ENCODE measurements at regions of chr11 and their contacts with region 1.

Region 1: GRCh38 chr11:1832211-1832919 is 2.4 kb upstream of the SYT8 start:
- DNase-seq: no peak
- H3K4me3 ChIP-seq: peak overlapping the region in 3 of 4 donors; percentile 5 to 34 (median 30)
- H3K27ac ChIP-seq: no peak overlapping the region
- H3K4me1 ChIP-seq: peaks cover 8 to 21% (median 11%) of the 10 kb centered on the region in 4 donors
- H3K27me3 ChIP-seq: peaks cover 0 to 58% (median under 1%) of the 10 kb centered on the region in 4 donors
- CTCF ChIP-seq: peak; percentile 91 to 99 (median 99)
- EP300 ChIP-seq: no peak
- POLR2A ChIP-seq: no peak

Region 2: GRCh38 chr11:1298695-1299492 is 533.5 kb before region 1 on chr11:
- intact Hi-C with region 1: no loop called
- DNase-seq: peak; percentile 95
- H3K4me3 ChIP-seq: peak overlapping the region in 2 of 4 donors; percentile 7 to 20
- H3K27ac ChIP-seq: peak overlapping the region; percentile 74 to 95 (median 80)
- H3K4me1 ChIP-seq: peaks cover 47 to 76% (median 63%) of the 10 kb centered on the region in 4 donors
- H3K27me3 ChIP-seq: no peaks in the 10 kb centered on the region
- CTCF ChIP-seq: no peak
- EP300 ChIP-seq: no peak
- POLR2A ChIP-seq: no peak

Region 3: DNA sequence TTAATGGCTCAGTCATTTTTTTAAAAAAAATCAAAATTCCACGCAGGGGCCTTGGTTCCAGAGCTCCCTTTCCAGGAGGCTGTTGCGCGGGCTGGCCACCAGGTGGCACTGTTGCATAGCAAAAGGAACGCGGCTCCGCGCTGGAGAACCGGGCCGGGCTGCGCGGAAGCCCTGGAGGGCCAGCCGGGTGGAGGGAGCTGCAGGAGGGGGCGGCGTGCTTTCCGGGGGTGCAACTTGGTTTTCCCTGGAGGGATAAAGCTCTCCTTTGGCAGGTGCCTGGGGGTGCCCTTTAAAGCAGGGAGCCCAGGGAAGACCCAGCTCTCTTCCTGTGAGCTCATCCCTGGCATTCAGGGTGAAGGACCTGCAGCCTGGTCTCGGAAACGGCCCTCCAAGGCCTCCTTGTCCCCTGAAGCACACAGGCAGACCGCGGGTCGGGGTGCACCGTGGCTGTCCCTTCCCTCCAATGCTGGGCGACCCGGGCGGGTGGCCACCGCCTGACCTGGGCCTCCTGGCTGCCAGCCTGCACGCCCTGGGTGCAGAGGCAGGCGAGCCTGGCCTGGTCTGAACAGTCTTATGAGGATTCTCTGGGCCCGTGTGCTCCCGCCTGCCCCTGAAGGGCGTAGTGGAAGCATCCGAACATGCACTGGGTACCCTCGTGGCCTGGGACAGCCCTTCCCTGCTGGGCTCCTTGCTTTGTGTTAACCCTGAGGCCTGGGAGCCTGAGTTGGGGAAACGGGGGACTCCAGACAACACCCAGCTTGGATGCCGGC is 179.4 kb before region 1 on chr11:
- intact Hi-C with region 1: loop called (anchors 2 kb)
- DNase-seq: no peak
- H3K4me3 ChIP-seq: no peak overlapping the region
- H3K27ac ChIP-seq: no peak overlapping the region
- H3K4me1 ChIP-seq: peaks cover 0 to 9% (median 8%) of the 10 kb centered on the region in 4 donors
- H3K27me3 ChIP-seq: peaks cover 0 to 35% (median 0%) of the 10 kb centered on the region in 4 donors
- CTCF ChIP-seq: peak; percentile 97 to 99 (median 97)
- EP300 ChIP-seq: no peak
- POLR2A ChIP-seq: no peak

Region 4: GRCh38 chr11:1694064-1694845 is 138.1 kb before region 1 on chr11:
- intact Hi-C with region 1: loop called (anchors 1 kb)
- DNase-seq: peak; percentile 96
- H3K4me3 ChIP-seq: peak overlapping the region in 3 of 4 donors; percentile 38 to 55 (median 45)
- H3K27ac ChIP-seq: peak overlapping the region in 2 of 4 donors; percentile 38 to 63
- H3K4me1 ChIP-seq: peaks cover 11 to 17% (median 14%) of the 10 kb centered on the region in 4 donors
- H3K27me3 ChIP-seq: peaks cover 0 to 42% (median 0%) of the 10 kb centered on the region in 4 donors
- CTCF ChIP-seq: peak; percentile 86 to 94 (median 89)
- EP300 ChIP-seq: no peak
- POLR2A ChIP-seq: no peak

Region 5: GRCh38 chr11:2186669-2187279 is 354.4 kb after region 1 on chr11:
- intact Hi-C with region 1: no loop called
- DNase-seq: no peak
- H3K4me3 ChIP-seq: no peak overlapping the region
- H3K27ac ChIP-seq: no peak overlapping the region
- H3K4me1 ChIP-seq: no peaks in the 10 kb centered on the region
- H3K27me3 ChIP-seq: peaks cover 0 to 85% (median 3%) of the 10 kb centered on the region in 4 donors
- CTCF ChIP-seq: peak in 1 of 3 experiments; percentile 39
- EP300 ChIP-seq: no peak
- POLR2A ChIP-seq: no peak

Measured in esophagus muscularis mucosa (tissue), 4 donors.